ENCODE measurements at regions of chr12 and their contacts with region 1.

Region 1: DNA sequence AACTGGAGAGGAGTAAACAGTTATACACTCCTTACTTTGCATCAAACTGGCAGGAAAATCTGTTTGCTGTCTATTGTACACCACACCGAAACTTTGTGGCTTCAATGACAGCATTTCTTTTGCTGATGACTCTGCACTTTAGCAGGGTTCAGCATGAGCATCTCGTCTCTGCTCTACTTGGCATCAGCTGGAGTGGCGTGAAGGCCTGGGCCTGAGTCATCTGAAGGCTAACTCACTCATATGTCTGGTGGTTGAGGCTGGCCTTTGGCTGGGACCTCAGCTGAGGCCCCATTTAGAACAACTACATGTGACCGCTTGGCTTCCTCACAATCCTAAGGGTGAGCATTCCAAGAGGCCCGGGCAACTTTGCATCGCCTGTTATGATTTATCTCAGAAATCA is 28.7 kb upstream of the REP15 start:
- DNase-seq: no peak
- ATAC-seq: no peak
- H3K4me3 ChIP-seq: no peak overlapping the region
- H3K4me3 Mint-ChIP-seq: no peak overlapping the region
- H3K27ac ChIP-seq: no peak overlapping the region
- H3K27ac Mint-ChIP-seq: no peak overlapping the region
- H3K4me1 ChIP-seq: no peaks in the 10 kb centered on the region
- H3K4me1 Mint-ChIP-seq: no peaks in the 10 kb centered on the region
- H3K27me3 ChIP-seq: no peaks in the 10 kb centered on the region
- H3K27me3 Mint-ChIP-seq: peaks cover 8 to 15% of the 10 kb centered on the region in 2 donors
- CTCF ChIP-seq: no peak

Region 2: DNA sequence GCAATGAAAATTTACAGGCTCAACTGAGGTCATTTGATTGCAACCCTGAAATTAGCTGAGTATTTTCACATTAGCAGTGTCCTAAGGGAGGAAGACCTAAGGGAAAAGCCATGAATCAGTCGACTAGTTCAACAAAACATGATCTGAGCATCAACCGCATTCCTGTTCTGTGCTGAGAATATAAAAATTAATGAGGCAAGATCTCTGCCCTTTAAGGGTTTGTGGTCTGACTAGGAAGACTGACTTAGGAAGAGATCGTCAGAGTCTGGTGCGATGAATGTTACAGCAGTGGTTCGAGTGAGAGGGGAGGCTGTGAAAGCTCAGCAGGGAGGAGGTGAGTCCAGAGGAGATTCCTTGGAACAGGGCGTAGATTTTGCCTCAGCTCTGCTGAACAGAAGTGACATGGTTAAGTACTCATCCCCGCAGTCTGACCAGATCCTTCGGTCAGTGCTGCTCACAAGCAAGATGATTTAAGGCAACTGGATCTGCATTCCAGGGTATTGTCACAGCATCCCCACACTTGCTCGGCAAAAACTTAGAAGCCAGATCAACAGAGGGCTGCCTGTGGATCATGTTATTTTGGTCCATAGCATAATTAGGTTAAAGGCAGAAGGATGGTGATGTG is 285.3 kb before region 1 on chr12:
- intact Hi-C with region 1: no loop called
- DNase-seq: no peak
- ATAC-seq: no peak
- H3K4me3 ChIP-seq: no peak overlapping the region
- H3K4me3 Mint-ChIP-seq: no peak overlapping the region
- H3K27ac ChIP-seq: no peak overlapping the region
- H3K27ac Mint-ChIP-seq: no peak overlapping the region
- H3K4me1 ChIP-seq: no peaks in the 10 kb centered on the region
- H3K4me1 Mint-ChIP-seq: no peaks in the 10 kb centered on the region
- H3K27me3 ChIP-seq: no peaks in the 10 kb centered on the region
- H3K27me3 Mint-ChIP-seq: no peaks in the 10 kb centered on the region
- CTCF ChIP-seq: no peak

Region 3: GRCh38 chr12:27644158-27644845 is 23.2 kb before region 1 on chr12:
- intact Hi-C with region 1: no loop called
- DNase-seq: no peak
- ATAC-seq: no peak
- H3K4me3 ChIP-seq: no peak overlapping the region
- H3K4me3 Mint-ChIP-seq: no peak overlapping the region
- H3K27ac ChIP-seq: no peak overlapping the region
- H3K27ac Mint-ChIP-seq: no peak overlapping the region
- H3K4me1 ChIP-seq: no peaks in the 10 kb centered on the region
- H3K4me1 Mint-ChIP-seq: no peaks in the 10 kb centered on the region
- H3K27me3 ChIP-seq: no peaks in the 10 kb centered on the region
- H3K27me3 Mint-ChIP-seq: no peaks in the 10 kb centered on the region
- CTCF ChIP-seq: no peak

Region 4: DNA sequence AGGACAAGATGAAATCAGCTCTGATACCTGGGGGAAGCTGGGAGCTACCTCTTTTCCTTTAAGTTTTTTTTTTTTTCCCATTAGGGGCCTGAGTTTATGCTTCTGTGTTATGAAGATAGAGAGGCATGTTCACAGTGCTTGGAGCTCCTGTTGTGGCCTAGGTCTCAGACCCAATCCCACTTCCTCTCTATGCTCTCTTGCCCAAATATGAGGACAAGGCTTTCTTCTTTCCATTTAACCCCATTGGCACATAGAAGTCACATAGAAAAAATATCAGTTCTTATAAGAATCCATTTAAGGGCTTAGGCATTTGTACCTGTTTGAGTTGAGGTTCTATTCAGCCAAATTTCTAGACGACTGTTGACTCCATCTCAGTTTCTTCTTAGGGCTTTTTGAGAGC is 55.7 kb after region 1 on chr12:
- intact Hi-C with region 1: no loop called
- DNase-seq: no peak
- ATAC-seq: no peak
- H3K4me3 ChIP-seq: no peak overlapping the region
- H3K4me3 Mint-ChIP-seq: no peak overlapping the region
- H3K27ac ChIP-seq: no peak overlapping the region
- H3K27ac Mint-ChIP-seq: no peak overlapping the region
- H3K4me1 ChIP-seq: no peaks in the 10 kb centered on the region
- H3K4me1 Mint-ChIP-seq: no peaks in the 10 kb centered on the region
- H3K27me3 ChIP-seq: no peaks in the 10 kb centered on the region
- H3K27me3 Mint-ChIP-seq: no peaks in the 10 kb centered on the region
- CTCF ChIP-seq: no peak

Region 5: GRCh38 chr12:28104903-28105864 is 437.6 kb after region 1 on chr12:
- intact Hi-C with region 1: loop called (anchors 5 kb)
- DNase-seq: no peak
- ATAC-seq: no peak
- H3K4me3 ChIP-seq: no peak overlapping the region
- H3K4me3 Mint-ChIP-seq: no peak overlapping the region
- H3K27ac ChIP-seq: no peak overlapping the region
- H3K27ac Mint-ChIP-seq: no peak overlapping the region
- H3K4me1 ChIP-seq: no peaks in the 10 kb centered on the region
- H3K4me1 Mint-ChIP-seq: no peaks in the 10 kb centered on the region
- H3K27me3 ChIP-seq: peaks cover 2% of the 10 kb centered on the region
- H3K27me3 Mint-ChIP-seq: no peaks in the 10 kb centered on the region
- CTCF ChIP-seq: no peak

Measured in natural killer cell (primary cell).